GM10248 (cell line): ENCODE measurements at regions of chr6 and their contacts with region 1.

Region 1: DNA sequence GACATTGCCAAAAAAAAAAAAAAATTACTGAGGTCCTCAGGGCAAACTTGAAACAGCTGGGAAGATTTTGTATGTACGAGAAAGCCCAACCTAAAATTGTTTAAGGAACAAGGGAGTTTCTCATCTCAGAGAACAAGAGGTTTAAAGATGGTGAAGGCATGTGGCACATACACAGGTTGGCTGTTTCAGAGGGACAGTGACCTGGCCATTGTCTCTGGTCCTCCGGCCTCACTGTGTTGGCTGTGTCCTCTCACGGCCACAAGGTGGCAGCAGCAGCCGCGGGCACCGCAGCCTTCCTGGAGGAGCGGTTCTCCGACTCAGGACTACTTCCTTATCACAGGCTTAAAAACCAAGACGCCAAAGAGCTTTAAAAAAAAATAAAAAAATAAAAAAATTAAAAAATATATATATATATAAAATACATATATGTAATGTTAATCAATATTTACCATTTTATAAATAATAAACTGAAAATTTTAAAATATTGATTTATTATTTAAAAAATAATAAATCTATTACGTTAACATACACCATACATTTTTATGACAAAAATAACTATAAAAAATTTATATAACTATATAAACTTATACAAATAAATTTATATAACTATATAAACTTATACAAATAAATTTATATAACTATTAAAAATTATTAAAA is 52.8 kb downstream of the GTF2H5 start:
- DNase-seq: peak; percentile 85
- CTCF ChIP-seq: peak; percentile 95

Region 2: DNA sequence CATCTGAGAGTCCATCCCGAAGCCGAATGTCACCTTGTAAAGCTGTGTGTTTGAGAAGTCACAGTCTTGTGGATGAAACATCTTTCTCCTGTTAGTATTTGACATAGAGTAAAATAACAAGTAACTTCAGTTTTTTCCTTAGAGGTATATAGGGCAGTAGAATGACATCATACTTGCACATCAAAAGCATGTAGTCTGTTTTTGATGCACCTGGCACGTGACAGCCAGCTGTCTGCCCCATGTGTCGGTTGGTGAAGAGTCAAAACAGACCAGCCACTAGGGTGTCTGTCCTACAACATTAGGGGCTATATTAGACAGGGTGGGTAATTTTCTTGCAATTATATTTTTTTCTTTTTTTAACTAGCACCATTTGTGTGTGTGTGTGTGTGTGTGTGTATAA is 327.7 kb before region 1 on chr6:
- CTCF ChIA-PET with region 1: no interaction called
- POLR2A ChIA-PET with region 1: no interaction called
- DNase-seq: no peak
- CTCF ChIP-seq: no peak

Region 3: DNA sequence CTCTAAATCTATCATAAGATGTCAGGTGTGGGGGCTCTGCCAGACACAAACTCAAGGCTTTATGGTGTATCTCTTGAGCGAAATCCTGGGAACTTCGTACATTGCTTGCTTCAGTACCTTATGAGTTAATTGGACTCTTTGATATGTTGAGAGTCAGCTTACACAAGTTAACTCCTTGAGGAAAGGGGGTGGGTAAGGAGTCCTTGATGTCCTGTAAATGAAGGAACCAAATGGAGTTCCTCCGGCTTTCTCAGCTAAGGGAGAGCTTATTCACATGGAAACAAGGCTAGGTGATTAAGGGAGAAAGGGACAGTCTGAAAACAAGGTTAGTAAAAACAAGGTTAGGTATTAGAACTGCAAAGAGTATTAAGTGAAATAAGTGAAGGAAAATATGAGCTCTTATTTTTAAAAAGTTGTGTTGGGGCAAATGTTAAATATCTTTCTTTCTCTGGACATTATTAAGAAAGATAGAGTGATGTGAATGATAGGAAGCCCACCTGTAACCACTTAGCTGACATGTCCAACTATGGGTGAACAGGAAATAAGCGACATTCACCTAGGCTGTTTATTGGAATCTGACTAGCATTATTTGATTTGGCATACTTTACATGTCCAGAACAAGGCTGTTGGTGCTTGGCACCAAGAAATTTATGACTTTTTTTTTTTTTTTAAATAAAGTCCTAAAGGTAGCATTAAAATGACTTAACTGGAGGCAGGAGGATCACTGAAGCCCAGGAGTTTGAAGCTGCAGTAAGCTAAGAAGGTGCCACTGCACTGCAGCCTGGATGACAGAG is 26.2 kb before region 1 on chr6:
- CTCF ChIA-PET with region 1: interaction called, 10 read pairs
- POLR2A ChIA-PET with region 1: no interaction called
- DNase-seq: no peak
- CTCF ChIP-seq: no peak

Region 4: DNA sequence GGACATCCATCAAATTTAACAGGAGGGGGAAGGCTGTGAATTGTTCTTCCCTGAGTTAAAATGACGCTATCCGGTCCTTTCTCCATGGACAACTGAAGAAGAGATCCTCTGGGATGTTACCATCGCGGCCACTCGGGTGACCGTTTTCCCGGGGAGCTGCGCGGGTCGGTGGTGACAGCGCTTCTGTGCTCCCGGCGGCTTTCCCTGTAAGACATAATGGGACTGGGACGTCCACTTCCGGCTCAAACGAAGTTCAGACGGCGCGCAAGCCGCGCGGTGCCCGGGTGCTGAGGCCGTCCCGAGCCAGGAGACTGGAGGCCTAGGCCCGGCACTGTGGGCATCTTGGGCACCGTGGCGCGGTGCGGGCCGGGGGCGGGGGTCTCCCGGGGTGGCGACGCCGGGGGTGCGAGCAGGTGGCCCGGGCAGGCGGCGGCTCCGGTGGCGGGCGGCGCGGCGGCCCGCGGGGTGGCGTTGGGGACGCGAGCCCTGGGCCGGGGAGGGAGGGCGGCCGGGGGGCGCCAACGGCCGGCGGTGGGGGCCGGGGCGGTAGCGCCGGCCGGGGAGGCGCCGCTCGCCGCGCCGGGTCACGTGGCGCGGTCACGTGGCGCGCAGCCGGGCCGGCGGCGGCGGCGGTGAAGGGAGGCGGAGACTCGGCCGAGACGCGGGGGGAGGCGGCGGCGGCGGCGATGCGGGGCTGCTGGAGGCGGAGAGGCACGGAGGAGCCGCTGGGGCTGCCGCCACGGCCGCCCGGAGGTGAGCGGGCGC is 10.8 kb after region 1 on chr6:
- CTCF ChIA-PET with region 1: interaction called, 21 read pairs
- POLR2A ChIA-PET with region 1: no interaction called
- DNase-seq: peak; percentile 92
- CTCF ChIP-seq: no peak

Region 5: GRCh38 chr6:158313989-158314388 is 93.1 kb after region 1 on chr6:
- CTCF ChIA-PET with region 1: no interaction called
- POLR2A ChIA-PET with region 1: no interaction called
- DNase-seq: peak; percentile 25
- CTCF ChIP-seq: no peak

Region 6: DNA sequence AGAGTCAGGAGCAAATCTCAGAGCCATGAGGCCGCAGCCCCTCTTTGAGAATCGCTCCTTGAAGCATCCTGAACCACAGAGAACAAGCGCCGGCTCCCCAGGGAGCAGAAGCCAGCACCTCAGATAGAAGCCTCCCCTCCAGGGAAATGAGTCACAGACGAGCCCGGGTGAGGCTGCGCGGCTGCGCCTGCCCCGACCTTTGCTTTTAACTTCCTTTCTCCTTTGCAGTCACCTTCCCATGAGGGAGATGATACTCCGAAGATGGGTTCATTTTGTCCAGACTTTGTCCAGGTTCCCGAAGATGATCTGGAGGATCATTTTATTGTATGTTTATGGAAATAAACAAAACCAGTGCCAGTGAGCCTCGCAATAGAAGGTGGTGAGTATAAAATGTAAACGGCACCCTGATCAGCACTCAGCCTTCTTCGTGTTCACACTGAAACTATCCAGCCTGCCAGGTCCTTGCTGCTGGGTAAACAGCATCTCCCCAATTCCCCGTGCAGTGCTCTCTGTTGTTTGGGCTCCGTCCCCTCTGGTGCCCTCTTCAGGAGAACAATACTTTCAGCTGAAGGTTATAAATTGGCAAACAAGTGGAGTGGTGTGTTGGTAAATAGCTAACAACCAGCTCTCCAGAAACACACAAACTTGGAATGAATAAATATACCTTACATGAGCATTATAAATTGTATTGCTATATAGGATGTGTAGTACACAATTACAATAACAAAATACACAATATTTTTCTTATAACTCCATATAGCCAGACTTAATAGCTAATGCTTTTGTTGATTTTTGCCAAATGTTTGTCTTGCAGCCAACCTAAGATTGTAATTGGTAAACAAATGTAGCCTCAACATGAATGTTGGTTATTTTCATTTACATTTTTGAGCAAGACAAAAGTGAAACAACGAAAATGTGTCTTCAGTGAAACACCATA is 297.5 kb after region 1 on chr6:
- CTCF ChIA-PET with region 1: interaction called, 20 read pairs
- POLR2A ChIA-PET with region 1: no interaction called
- DNase-seq: peak; percentile 77
- CTCF ChIP-seq: peak; percentile 55

Region 7: GRCh38 chr6:158621694-158622544 is 401.0 kb after region 1 on chr6:
- CTCF ChIA-PET with region 1: interaction called, 12 read pairs
- POLR2A ChIA-PET with region 1: no interaction called
- DNase-seq: peak; percentile 10
- CTCF ChIP-seq: no peak

Region 8: DNA sequence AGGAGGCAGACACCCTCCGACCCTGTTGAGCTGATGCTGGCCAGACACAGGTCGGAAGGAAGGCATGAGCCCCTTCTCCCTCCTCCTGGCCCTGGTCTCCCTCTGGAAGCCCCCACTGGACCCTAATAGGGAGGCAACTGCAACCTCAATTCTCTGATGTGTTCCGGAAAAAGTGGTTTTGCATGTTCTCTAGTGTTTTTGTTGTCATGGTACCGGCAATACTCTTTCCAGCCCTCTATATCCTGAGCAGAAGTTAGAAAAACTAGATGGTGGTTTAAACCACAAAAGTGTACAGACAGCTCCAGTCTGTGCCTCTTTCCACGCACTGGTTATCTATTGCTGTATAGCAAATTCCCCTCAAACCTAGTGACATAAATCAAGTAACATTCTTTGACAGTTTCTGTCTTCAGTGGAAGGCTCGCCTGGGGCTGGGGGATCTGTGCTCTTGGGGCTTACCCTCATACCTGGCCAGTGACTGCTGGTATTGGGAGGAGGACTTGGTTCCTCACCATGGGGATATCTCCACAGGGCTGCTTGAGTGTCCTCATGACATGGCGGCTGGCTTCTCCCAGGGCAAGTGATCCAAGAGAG is 466.0 kb after region 1 on chr6:
- CTCF ChIA-PET with region 1: interaction called, 39 read pairs
- POLR2A ChIA-PET with region 1: no interaction called
- DNase-seq: peak; percentile 46
- CTCF ChIP-seq: no peak